Right ventricle myocardium inferior (tissue), 1 donor: ENCODE measurements at regions of chr10 and their contacts with region 1.

Region 1: DNA sequence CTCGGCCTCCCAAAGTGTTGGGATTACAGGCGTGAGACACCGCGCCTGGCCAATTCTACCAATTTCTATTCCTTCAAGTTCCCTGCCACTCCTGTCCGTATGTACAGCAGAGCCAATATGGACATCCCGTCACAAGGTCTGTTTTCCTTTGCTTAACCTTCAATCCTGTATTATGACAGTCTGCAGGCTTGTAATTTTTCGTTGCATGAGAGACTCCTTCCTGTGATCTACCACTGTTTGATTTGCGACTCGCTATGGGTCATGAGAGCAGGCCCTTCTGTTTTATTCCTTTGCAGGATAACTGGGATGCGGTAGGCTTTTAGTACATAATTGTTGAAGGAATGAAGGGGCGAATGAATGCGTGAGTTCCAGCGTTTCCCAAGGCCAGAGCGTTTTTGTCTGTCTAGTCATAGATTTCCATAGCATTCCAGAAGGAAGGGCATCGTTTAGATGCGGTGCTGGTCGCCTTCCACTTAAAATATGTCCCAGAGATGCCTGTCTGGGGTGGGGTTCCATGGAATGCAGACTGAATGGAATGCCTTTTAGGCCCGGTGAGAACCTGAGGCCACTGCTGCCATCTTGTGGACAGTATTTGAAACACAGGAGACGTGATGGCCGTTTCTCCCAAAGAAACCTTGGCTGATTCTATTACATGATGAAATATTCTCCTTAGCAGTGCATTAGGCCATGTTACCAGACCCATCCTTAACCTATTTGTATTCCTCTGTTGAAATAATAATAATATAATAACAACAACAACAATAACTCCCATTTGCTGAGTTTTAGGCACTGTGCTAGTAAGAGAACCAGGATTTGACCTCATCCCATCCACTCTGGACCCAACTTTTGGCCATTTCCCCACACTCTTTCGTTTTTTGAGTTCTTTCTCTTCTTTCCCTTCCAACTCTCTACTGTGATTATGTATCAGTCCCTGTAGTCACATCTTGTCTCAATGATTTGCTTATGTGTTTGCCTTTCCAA is 193.2 kb downstream of the MYOF start:
- DNase-seq: no peak
- ATAC-seq: peak; percentile 70

Region 2: DNA sequence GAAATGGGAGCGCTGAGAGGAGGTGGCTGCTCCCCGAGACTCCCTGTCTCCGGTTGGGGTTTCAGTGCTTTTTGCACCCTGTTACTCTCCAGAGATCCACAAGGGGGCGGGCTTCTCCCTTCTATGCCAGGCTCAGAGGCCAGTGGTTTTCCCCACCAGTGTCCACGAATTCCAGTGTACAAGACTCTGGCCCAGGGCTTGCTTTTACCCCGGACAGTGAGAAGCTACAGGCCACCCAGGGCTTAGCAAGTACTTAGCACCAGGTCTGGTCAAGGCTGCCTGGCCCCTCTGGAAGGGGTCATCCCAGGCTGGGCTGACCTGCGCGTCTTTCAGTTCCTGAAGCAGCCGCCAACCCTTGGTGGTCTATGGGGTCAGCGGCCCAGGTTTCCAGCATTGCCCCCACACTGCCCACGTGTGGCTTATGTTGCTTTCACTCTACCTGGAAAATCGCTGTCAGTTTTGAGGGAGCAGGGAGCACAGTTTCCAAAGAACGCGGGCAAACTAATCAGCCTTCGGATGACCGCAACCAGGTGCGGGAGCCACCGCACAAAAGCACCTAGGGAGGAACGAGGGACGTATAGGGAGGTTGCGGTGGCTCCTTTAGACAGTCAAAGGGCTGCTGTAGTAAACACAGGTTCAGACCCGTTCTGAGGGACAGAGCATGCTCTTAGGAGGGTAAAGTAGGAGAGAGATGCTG is 208.4 kb before region 1 on chr10:
- intact Hi-C with region 1: loop called (anchors 2 kb)
- DNase-seq: no peak
- ATAC-seq: peak; percentile 50

Region 3: DNA sequence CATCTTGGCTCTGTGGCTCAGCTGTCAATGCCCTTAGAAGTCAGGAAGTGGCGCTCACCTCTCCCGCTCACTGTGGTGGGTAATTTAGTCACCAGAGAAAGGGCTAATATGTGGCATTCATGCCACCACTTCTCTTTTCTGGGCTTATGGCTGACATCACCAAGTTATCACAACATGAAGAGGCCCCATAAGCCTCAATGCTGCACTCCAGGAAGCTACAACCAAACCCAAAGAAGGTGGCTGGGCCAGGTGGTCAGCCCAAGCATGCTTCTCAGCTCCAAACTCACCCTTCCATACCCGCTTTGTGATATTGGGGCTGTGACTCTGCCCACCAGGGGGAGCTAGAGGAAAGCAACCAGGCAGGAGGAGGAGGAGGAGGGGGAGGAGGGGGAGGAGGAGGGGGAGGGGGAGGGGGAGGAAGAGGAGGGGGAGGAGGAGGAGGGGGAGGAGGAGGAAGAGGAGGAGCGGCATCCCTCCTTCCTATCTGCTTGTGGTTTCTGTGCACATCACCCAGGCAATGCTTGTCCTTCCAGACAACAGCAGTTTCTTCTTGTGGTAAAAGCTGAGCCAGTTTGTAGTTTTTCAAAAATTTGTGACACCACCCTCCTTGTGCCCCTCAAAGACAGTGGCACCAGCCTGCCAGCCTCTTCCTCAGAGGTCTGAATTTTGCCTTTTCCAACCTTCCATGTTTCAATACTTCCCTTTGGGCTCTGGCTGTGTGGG is 173.1 kb before region 1 on chr10:
- intact Hi-C with region 1: loop called (anchors 2 kb)
- DNase-seq: peak; percentile 62
- ATAC-seq: no peak